CD4-positive, alpha-beta memory T cell (primary cell): ENCODE measurements at regions of chr7 and their contacts with region 1.

Region 1: DNA sequence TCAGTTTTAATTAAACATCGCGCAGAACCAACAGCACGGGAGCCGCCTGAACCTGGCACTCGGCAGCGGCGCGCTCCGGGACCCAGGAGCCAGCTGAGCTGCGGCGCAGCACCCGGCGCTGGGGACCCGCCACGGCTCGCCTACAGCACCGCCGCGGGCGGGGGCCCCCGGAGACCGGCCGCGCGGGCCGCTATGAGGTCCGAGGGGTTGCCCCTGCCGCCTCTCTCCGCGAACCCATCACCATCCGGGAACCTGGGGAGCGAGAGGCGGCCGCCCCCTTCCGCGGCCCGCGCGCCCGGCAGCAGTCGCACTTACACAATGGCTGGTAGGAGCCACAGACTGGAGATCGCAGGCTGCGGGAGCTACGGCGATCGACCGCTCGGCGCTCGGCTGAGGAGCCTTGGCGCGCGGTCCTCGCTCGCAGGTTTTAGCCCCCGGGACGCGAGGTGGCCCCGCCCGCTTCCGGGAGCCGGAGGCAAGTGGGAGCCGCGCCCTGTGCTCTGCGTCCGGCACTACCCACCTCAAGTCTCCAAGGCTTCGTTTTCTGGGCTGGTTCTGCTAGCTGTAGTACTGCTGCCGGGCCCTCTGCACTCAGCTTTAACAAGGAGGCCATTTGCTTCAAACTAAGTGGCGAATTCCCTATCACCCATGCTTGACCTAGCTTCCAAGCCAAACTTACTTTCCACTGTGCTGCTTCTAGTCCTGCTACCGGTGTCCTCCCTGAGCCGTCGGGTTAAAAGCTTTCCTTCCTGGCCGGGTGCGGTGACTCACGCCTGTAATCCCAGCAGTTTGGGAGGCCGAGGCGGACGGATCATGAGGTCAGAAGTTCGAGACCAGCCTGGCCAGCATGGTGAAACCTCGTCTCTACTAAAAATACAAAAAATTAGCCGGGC is at the start of gene TPK1:
- DNase-seq: peak; percentile 89 to 93 (median 91)
- H3K4me3 ChIP-seq: peak within 1 kb of the TSS; percentile 74 to 94
- H3K4me3 Mint-ChIP-seq: peak within 1 kb of the TSS; percentile 95 to 99 (median 98)
- H3K27ac ChIP-seq: peak within 1 kb of the TSS; percentile 76
- H3K27ac Mint-ChIP-seq: peak within 1 kb of the TSS; percentile 95 to 99 (median 99)
- H3K4me1 ChIP-seq: peaks cover 50% of the 10 kb centered on the region
- H3K4me1 Mint-ChIP-seq: peaks cover 20 to 45% (median 34%) of the 10 kb centered on the region in 4 donors
- H3K27me3 ChIP-seq: no peaks in the 10 kb centered on the region
- H3K27me3 Mint-ChIP-seq: no peaks in the 10 kb centered on the region
- total RNA-seq, gene TPK1: 26.7 to 30.7 TPM

Region 2: DNA sequence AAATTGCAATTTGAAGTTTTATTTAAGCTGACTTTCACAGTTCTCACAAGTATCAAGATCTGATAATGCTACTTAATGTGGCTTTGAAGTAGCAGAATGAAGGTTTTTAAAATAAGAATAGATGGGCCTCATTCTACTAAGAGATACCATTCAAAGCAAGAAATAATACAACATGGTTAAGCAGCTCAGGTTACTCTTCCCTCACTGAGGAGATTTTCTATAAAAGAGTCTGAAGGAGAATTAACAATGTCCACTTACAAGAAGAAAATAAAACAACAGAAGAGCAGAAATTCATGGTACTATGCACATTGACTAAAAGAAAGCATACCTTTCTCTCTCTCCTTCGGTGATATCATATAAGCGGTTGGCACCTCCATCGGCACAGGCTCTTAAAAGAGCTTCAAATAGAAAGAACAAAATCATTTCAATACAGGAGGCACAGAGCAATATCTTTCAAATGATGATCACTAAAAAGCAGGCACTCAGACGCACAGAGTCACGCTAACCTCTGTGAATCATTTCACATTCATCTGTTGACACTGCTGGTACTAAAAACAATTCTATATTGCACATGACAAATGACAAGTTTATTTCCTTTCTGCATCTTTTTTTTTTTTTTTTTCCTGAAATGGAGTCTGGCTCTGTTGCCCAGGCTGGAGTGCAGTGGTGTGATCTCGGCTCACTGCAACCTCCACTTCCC is 153.2 kb before region 1 on chr7:
- CTCF ChIA-PET with region 1: no interaction called
- POLR2A ChIA-PET with region 1: no interaction called
- intact Hi-C with region 1: no loop called
- DNase-seq: no peak
- H3K4me3 ChIP-seq: no peak overlapping the region
- H3K4me3 Mint-ChIP-seq: no peak overlapping the region
- H3K27ac ChIP-seq: no peak overlapping the region
- H3K27ac Mint-ChIP-seq: no peak overlapping the region
- H3K4me1 ChIP-seq: no peaks in the 10 kb centered on the region
- H3K4me1 Mint-ChIP-seq: peaks cover 0 to 1% (median 0%) of the 10 kb centered on the region in 4 donors
- H3K27me3 ChIP-seq: no peaks in the 10 kb centered on the region
- H3K27me3 Mint-ChIP-seq: no peaks in the 10 kb centered on the region

Region 3: GRCh38 chr7:144738708-144739314 is 97.1 kb before region 1 on chr7:
- CTCF ChIA-PET with region 1: interaction called, 26 read pairs
- POLR2A ChIA-PET with region 1: interaction called, 32 read pairs
- intact Hi-C with region 1: loop called (anchors 1 kb)
- DNase-seq: peak in 4 of 5 donors; percentile 33 to 46 (median 38)
- H3K4me3 ChIP-seq: no peak overlapping the region
- H3K4me3 Mint-ChIP-seq: no peak overlapping the region
- H3K27ac ChIP-seq: no peak overlapping the region
- H3K27ac Mint-ChIP-seq: peak overlapping the region in 1 of 7 donors; percentile 62
- H3K4me1 ChIP-seq: no peaks in the 10 kb centered on the region
- H3K4me1 Mint-ChIP-seq: peaks cover 0 to 7% (median 2%) of the 10 kb centered on the region in 4 donors
- H3K27me3 ChIP-seq: no peaks in the 10 kb centered on the region
- H3K27me3 Mint-ChIP-seq: no peaks in the 10 kb centered on the region

Region 4: GRCh38 chr7:144796919-144797318 is 39.0 kb before region 1 on chr7:
- CTCF ChIA-PET with region 1: no interaction called
- POLR2A ChIA-PET with region 1: interaction called, 19 read pairs
- intact Hi-C with region 1: loop called (anchors 5 kb)
- DNase-seq: no peak
- H3K4me3 ChIP-seq: no peak overlapping the region
- H3K4me3 Mint-ChIP-seq: no peak overlapping the region
- H3K27ac ChIP-seq: no peak overlapping the region
- H3K27ac Mint-ChIP-seq: peak overlapping the region in 1 of 7 donors; percentile 30
- H3K4me1 ChIP-seq: peaks cover 9% of the 10 kb centered on the region
- H3K4me1 Mint-ChIP-seq: peaks cover 32 to 42% (median 35%) of the 10 kb centered on the region in 4 donors
- H3K27me3 ChIP-seq: no peaks in the 10 kb centered on the region
- H3K27me3 Mint-ChIP-seq: no peaks in the 10 kb centered on the region

Region 5: GRCh38 chr7:144818511-144818910 is 17.4 kb before region 1 on chr7:
- CTCF ChIA-PET with region 1: interaction called, 83 read pairs
- POLR2A ChIA-PET with region 1: interaction called, 409 read pairs
- intact Hi-C with region 1: loop called (anchors 1 kb)
- DNase-seq: peak; percentile 72 to 88 (median 77)
- H3K4me3 ChIP-seq: peak overlapping the region in 1 of 2 donors; percentile 3
- H3K4me3 Mint-ChIP-seq: peak overlapping the region; percentile 46 to 84 (median 72)
- H3K27ac ChIP-seq: peak overlapping the region; percentile 54
- H3K27ac Mint-ChIP-seq: peak overlapping the region; percentile 80 to 99 (median 93)
- H3K4me1 ChIP-seq: peaks cover 67% of the 10 kb centered on the region
- H3K4me1 Mint-ChIP-seq: peaks cover 64 to 90% (median 72%) of the 10 kb centered on the region in 4 donors
- H3K27me3 ChIP-seq: no peaks in the 10 kb centered on the region
- H3K27me3 Mint-ChIP-seq: no peaks in the 10 kb centered on the region

Region 6: DNA sequence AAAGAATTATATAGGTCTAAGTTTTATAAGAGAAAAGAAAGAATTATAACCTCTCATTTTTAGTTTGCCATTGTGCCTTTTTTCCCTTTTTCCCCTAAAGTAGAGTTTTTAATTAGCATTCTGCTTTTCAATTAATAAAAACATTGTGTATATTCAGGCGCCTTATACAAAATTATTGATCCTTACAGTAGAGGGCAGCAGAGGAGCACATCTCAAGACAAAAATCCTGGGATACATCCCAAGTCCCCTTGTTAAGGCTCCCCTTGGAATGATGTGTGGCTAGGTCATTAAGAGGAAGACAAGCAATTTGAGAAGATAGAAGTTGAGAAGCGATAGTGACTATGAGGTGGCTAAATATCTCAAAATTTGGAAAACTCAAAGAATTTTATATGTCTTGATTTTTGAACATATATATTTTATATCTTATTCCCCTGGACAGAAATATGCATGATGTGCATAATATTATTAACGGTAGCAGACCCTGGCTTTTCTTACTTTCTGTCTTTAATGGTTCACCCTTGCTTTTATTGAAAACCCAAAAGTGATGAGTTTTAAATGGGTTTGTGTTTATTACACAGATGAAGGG is 19.0 kb after region 1 on chr7:
- CTCF ChIA-PET with region 1: interaction called, 32 read pairs
- POLR2A ChIA-PET with region 1: interaction called, 13 read pairs
- intact Hi-C with region 1: loop called (anchors 1 kb)
- DNase-seq: no peak
- H3K4me3 ChIP-seq: no peak overlapping the region
- H3K4me3 Mint-ChIP-seq: no peak overlapping the region
- H3K27ac ChIP-seq: no peak overlapping the region
- H3K27ac Mint-ChIP-seq: no peak overlapping the region
- H3K4me1 ChIP-seq: no peaks in the 10 kb centered on the region
- H3K4me1 Mint-ChIP-seq: no peaks in the 10 kb centered on the region
- H3K27me3 ChIP-seq: no peaks in the 10 kb centered on the region
- H3K27me3 Mint-ChIP-seq: no peaks in the 10 kb centered on the region